ENCODE measurements at regions of chrX and their contacts with region 1.

Region 1: GRCh38 chrX:26295425-26295824 is 79.5 kb downstream of the MAGEB5 start:
- DNase-seq: no peak
- ATAC-seq: no peak
- H3K4me3 ChIP-seq: no peak overlapping the region
- H3K27ac ChIP-seq: no peak overlapping the region
- H3K4me1 ChIP-seq: no peaks in the 10 kb centered on the region
- H3K27me3 ChIP-seq: no peaks in the 10 kb centered on the region
- CTCF ChIP-seq: no peak

Region 2: DNA sequence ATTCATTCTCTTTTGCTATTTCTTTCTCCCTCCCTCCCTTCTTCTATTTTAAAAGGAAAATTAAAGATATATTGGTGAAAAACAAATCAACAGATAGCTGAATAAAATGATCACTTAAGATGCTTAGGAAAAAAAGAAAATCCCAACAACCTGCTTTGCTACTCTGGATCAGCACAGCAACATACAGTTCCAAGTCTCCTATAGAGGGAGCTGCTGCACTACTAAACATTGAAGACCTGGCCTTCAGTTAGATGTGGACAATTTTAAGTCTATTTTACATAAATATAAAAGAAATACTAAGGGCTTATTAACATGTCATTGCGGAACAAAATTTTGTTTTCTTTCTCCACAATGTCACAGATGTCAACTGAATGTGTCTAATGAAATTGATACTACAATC is 146.9 kb after region 1 on chrX:
- CTCF ChIA-PET with region 1: no interaction called
- POLR2A ChIA-PET with region 1: no interaction called
- in situ Hi-C with region 1: no loop called
- intact Hi-C with region 1: loop called (anchors 5 kb)
- DNase-seq: no peak
- ATAC-seq: no peak
- H3K4me3 ChIP-seq: no peak overlapping the region
- H3K27ac ChIP-seq: no peak overlapping the region
- H3K4me1 ChIP-seq: no peaks in the 10 kb centered on the region
- H3K27me3 ChIP-seq: no peaks in the 10 kb centered on the region
- CTCF ChIP-seq: peak; percentile 6; the same call in 1 of the 2 replicates

Region 3: DNA sequence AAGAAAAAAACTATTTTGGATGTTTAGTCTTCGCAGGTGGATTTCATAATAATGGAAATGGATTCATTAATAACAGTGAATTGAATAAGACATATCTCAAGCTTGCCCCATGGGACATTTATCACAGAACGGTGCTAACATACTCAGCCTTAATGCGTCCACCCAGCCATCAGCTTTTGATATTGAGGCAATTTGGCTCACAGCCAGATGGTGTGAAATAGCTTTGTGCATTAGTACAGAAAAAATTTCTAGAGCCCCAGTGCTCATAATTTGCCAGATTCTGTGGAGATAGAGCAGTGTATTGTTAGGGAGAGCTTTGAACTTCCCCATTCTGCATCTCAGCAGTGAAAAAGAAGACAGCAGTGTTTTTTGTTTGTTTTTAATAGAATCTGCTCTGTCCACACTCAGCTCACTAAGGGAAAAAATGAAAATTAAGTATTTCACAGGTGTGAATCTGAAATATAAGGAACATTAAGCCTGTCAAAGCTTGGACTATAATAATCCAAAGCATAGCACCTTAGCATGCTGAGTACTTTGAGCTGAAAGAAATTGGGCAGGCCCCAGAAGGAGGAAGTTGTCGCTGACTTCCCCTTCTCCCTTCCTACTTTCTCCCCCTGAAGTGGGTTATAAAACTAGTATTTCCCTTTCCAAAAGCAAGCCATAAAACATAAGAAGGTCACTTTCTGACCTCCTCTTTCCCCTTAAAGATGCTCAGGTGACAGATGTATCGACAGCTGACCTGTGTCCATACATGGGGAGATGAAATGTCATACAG is 216.4 kb after region 1 on chrX:
- CTCF ChIA-PET with region 1: no interaction called
- POLR2A ChIA-PET with region 1: no interaction called
- in situ Hi-C with region 1: no loop called
- intact Hi-C with region 1: no loop called
- DNase-seq: no peak
- ATAC-seq: no peak
- H3K4me3 ChIP-seq: no peak overlapping the region
- H3K27ac ChIP-seq: no peak overlapping the region
- H3K4me1 ChIP-seq: no peaks in the 10 kb centered on the region
- H3K27me3 ChIP-seq: no peaks in the 10 kb centered on the region
- CTCF ChIP-seq: no peak

Measured in Panc1 (cell line).